ENCODE measurements at regions of chr9 and their contacts with region 1.

Region 1: DNA sequence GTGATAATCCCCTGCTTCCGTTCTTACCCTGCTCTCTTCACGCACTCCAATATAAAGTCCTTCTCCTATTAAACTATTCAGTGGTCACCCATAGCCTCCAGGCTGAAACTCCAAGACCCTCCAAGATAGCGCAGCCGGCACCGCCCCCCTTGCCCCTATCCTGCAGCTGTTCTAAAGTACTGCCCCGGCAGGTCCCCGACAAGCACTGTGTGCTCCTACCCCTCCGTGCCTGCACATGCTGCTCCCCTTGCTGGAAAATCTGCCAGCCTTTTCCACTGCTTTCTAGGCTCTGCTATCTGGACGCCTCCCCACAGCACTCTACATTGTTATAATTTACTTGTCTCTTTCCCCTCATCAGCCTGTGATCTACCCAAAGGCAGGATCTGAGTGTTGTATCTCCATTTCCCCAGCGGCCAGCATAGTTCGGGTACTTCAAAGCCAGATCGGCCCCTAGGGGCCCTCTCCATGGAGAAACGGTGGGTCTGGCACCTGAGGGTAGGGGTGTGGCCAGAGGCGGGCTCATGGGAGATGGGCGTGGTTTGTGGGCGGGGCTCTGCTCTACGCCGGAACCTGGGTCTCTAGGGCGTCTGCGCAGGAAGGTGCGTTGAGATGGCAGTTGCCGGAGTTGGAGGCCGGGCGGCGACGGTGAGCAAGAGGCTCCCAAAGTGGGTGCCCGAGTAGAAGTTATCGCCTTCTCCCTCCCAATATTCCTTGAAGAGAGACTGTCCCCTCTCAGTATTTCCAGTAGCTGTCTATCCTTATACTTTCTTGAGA is 83.5 kb upstream of the RUSC2 start:
- DNase-seq: no peak
- H3K4me3 Mint-ChIP-seq: no peak overlapping the region
- H3K27ac Mint-ChIP-seq: peak overlapping the region; percentile 17
- H3K4me1 Mint-ChIP-seq: no peaks in the 10 kb centered on the region
- H3K27me3 Mint-ChIP-seq: no peaks in the 10 kb centered on the region
- CTCF ChIP-seq: no peak

Region 2: GRCh38 chr9:35464141-35465025 is 58.0 kb after region 1 on chr9:
- CTCF ChIA-PET with region 1: no interaction called
- POLR2A ChIA-PET with region 1: no interaction called
- intact Hi-C with region 1: loop called (anchors 10 kb)
- DNase-seq: peak; percentile 63
- H3K4me3 Mint-ChIP-seq: no peak overlapping the region
- H3K27ac Mint-ChIP-seq: peak overlapping the region; percentile 78
- H3K4me1 Mint-ChIP-seq: peaks cover 35% of the 10 kb centered on the region
- H3K27me3 Mint-ChIP-seq: no peaks in the 10 kb centered on the region
- CTCF ChIP-seq: no peak

Region 3: GRCh38 chr9:36187414-36187813 is 781.0 kb after region 1 on chr9:
- CTCF ChIA-PET with region 1: no interaction called
- POLR2A ChIA-PET with region 1: no interaction called
- intact Hi-C with region 1: no loop called
- DNase-seq: no peak
- H3K4me3 Mint-ChIP-seq: no peak overlapping the region
- H3K27ac Mint-ChIP-seq: no peak overlapping the region
- H3K4me1 Mint-ChIP-seq: peaks cover 8% of the 10 kb centered on the region
- H3K27me3 Mint-ChIP-seq: no peaks in the 10 kb centered on the region
- CTCF ChIP-seq: no peak